ENCODE measurements at regions of chr5 and their contacts with region 1.

Region 1: DNA sequence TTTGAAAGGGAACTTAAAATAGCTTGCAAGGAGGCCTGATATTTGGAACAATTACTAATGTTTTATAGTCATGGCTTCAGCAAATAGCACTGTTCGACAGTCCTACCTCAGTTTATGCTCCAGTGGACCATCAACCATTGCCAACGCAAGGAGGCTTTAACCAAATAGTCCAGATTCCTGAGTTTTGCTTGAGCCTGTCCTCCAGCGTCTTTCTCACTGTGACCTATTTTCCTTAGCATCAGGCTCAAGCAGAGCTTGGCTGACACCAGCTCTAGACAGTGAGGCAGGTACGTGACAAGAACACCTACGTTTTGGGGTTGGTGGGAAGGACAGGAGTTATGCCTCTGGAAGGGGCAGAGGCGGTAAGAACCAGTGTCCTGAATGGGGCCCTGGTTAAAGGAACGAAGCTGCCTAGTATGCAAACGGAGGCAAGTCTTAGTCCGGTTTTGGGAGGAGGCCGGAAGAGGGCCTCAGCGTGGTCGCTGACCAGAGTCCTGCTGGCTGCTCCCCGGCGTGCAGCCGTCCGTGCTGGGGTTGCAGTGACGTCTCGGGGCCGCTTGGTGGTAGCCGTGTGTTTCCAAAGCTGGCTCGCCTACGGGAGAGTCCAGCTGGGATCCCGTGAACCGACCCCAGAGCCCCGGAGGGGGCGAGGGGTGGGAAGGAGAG is 998 bp upstream of the FGF18 start:
- DNase-seq: peak; percentile 69 to 94 (median 82)
- ATAC-seq: peak; percentile 85 to 95 (median 90)
- H3K4me3 ChIP-seq: peak overlapping the region in 2 of 4 donors; percentile 35 to 49
- H3K27ac ChIP-seq: no peak overlapping the region
- H3K4me1 ChIP-seq: peaks cover 8 to 14% (median 10%) of the 10 kb centered on the region in 3 donors
- H3K27me3 ChIP-seq: no peaks in the 10 kb centered on the region
- CTCF ChIP-seq: peak; percentile 83 to 94 (median 90)

Region 2: DNA sequence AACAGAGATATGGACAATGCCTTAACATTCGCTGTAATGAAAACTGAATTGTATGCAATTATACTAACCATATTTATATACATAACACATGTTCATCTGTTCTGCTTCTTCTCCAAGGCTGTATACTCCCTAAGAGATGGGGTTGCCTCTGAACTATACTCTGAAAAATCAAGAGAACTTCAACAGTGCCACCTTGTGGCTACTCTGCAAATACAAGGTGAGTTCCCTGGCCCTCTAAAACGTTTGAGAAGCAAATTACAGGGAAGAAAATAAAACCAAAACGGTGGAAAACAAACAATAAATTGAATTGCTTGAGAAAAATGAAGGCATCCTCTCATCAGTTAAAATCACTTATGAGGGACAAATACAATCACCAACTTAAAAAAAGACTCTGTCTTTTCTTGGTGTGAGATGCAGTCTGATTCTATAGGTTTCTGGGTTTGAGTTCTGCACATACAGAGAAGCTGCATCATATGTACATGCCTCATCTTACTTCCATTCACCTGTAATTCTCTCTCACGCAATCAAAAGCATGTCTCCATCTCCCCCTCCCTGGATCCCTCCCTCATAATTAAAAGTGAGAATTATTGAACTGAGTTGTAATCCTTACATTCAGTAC is 489.4 kb after region 1 on chr5:
- intact Hi-C with region 1: loop called in 2 of 3 experiments (anchors 5 to 10 kb)
- DNase-seq: peak in 1 of 6 donors; percentile 54
- ATAC-seq: peak; percentile 62 to 84 (median 80)
- H3K4me3 ChIP-seq: no peak overlapping the region
- H3K27ac ChIP-seq: no peak overlapping the region
- H3K4me1 ChIP-seq: peaks cover 6 to 13% (median 6%) of the 10 kb centered on the region in 3 donors
- H3K27me3 ChIP-seq: no peaks in the 10 kb centered on the region
- CTCF ChIP-seq: peak; percentile 49 to 74 (median 64)

Region 3: DNA sequence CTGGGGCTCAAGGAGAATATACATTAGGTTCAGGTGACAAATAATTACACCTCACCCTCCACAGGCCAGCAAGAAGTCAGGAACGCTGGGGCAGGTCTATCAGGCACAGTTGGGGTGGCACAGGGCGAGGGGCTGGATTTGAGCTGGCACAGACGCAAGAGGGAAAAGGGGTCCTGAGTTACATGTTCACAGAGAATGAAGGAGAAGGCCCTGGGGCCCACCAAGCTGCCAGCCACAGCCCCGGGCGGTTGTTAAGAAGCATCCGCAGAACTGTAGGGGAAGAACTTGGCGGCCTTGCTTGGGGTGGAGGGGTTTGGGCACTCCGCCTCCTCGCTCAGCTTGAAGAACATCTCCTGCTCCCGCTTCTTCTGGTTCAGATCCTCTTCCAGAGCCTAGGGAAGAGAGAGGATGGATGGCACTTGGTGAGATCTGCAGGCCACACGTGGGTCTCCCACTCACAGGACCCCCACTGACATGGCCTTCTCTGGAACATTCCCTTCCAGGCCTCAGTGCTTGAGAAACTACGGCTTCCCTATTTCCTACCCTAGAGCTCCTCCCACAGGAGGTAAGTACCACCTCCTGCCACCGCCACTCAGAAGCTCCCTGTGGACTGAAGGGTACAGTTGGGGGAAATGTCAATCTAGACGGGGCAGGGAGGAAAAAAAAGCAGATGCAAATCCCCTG is 626.3 kb after region 1 on chr5:
- intact Hi-C with region 1: loop called in 1 of 3 experiments (anchors 10 kb)
- DNase-seq: no peak
- ATAC-seq: no peak
- H3K4me3 ChIP-seq: no peak overlapping the region
- H3K27ac ChIP-seq: no peak overlapping the region
- H3K4me1 ChIP-seq: peaks cover 0 to 7% (median 0%) of the 10 kb centered on the region in 3 donors
- H3K27me3 ChIP-seq: no peaks in the 10 kb centered on the region
- CTCF ChIP-seq: no peak

Measured in pancreas (tissue), 10 donors.